CD8-positive, alpha-beta T cell (primary cell): ENCODE measurements at regions of chr3 and their contacts with region 1.

Region 1: DNA sequence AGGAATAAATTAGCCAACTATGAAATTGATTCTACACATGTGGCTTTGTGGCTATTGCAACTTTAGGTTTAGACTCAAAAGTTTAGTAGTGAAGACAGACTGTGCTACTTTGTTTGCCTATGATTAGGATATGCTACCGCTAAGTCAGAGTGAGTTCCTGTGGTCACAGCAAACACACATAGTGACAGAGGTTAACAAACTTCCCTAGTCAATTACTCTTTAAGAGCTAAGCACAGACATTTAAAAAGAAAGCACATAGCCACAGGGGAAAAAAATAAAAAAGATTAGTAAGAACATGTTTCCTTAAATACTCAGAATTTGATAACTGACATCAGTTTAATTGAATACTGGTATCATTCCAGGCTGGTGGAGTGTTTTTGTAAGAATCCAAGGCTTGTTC is 207.1 kb downstream of the GBE1 start:
- DNase-seq: no peak
- ATAC-seq: no peak
- H3K4me3 ChIP-seq: no peak overlapping the region
- H3K4me3 Mint-ChIP-seq: no peak overlapping the region
- H3K27ac ChIP-seq: no peak overlapping the region
- H3K27ac Mint-ChIP-seq: no peak overlapping the region
- H3K4me1 ChIP-seq: no peaks in the 10 kb centered on the region
- H3K4me1 Mint-ChIP-seq: no peaks in the 10 kb centered on the region
- H3K27me3 ChIP-seq: no peaks in the 10 kb centered on the region
- H3K27me3 Mint-ChIP-seq: no peaks in the 10 kb centered on the region
- CTCF ChIP-seq: no peak

Region 2: GRCh38 chr3:81518945-81519344 is 35.4 kb before region 1 on chr3:
- CTCF ChIA-PET with region 1: no interaction called
- POLR2A ChIA-PET with region 1: no interaction called
- intact Hi-C with region 1: loop called in 1 of 2 experiments (anchors 1 kb)
- DNase-seq: no peak
- ATAC-seq: no peak
- H3K4me3 ChIP-seq: no peak overlapping the region
- H3K4me3 Mint-ChIP-seq: no peak overlapping the region
- H3K27ac ChIP-seq: no peak overlapping the region
- H3K27ac Mint-ChIP-seq: no peak overlapping the region
- H3K4me1 ChIP-seq: no peaks in the 10 kb centered on the region
- H3K4me1 Mint-ChIP-seq: no peaks in the 10 kb centered on the region
- H3K27me3 ChIP-seq: no peaks in the 10 kb centered on the region
- H3K27me3 Mint-ChIP-seq: no peaks in the 10 kb centered on the region
- CTCF ChIP-seq: no peak